MCF 10A (cell line): ENCODE measurements at regions of chr3 and their contacts with region 1.

Region 1: GRCh38 chr3:114383875-114384557 is 90.2 kb downstream of the TIGIT start:
- DNase-seq: peak; percentile 76
- H3K4me3 Mint-ChIP-seq: peak overlapping the region; percentile 53
- H3K27ac Mint-ChIP-seq: no peak overlapping the region
- H3K4me1 Mint-ChIP-seq: no peaks in the 10 kb centered on the region
- H3K27me3 Mint-ChIP-seq: no peaks in the 10 kb centered on the region
- CTCF ChIP-seq: peak; percentile 95

Region 2: GRCh38 chr3:114143817-114144216 is 240.2 kb before region 1 on chr3:
- CTCF ChIA-PET with region 1: no interaction called
- POLR2A ChIA-PET with region 1: no interaction called
- intact Hi-C with region 1: no loop called
- DNase-seq: no peak
- H3K4me3 Mint-ChIP-seq: no peak overlapping the region
- H3K27ac Mint-ChIP-seq: no peak overlapping the region
- H3K4me1 Mint-ChIP-seq: peaks cover 11% of the 10 kb centered on the region
- H3K27me3 Mint-ChIP-seq: no peaks in the 10 kb centered on the region
- CTCF ChIP-seq: no peak

Region 3: GRCh38 chr3:114400371-114400770 is 16.4 kb after region 1 on chr3:
- CTCF ChIA-PET with region 1: interaction called, 52 read pairs
- POLR2A ChIA-PET with region 1: interaction called, 4 read pairs
- intact Hi-C with region 1: no loop called
- DNase-seq: no peak
- H3K4me3 Mint-ChIP-seq: no peak overlapping the region
- H3K27ac Mint-ChIP-seq: no peak overlapping the region
- H3K4me1 Mint-ChIP-seq: peaks cover 5% of the 10 kb centered on the region
- H3K27me3 Mint-ChIP-seq: no peaks in the 10 kb centered on the region
- CTCF ChIP-seq: no peak

Region 4: GRCh38 chr3:114418724-114419543 is 34.9 kb after region 1 on chr3:
- CTCF ChIA-PET with region 1: interaction called, 65 read pairs
- POLR2A ChIA-PET with region 1: no interaction called
- intact Hi-C with region 1: loop called (anchors 1 kb)
- DNase-seq: peak; percentile 83
- H3K4me3 Mint-ChIP-seq: peak overlapping the region; percentile 50
- H3K27ac Mint-ChIP-seq: peak overlapping the region; percentile 19
- H3K4me1 Mint-ChIP-seq: peaks cover 10% of the 10 kb centered on the region
- H3K27me3 Mint-ChIP-seq: no peaks in the 10 kb centered on the region
- CTCF ChIP-seq: peak; percentile 75

Region 5: DNA sequence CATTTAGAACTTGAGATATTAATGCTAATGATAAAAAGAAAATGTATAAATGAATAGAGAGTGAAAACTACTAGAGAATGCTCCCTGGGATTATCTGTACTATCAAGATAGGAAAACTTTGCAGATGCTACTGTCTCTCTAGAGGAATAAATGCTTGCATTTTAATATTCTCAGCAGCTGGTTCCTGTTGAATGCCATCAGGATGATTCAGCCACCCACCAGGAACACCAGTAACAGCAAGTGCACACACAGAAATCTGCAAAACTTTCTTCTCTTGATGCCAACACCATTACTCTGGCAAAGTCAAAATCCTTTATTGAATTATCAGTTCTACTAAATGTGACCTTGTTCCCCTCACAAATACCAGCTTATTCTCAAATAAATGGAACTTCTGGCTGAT is 58.2 kb after region 1 on chr3:
- CTCF ChIA-PET with region 1: interaction called, 12 read pairs
- POLR2A ChIA-PET with region 1: no interaction called
- intact Hi-C with region 1: no loop called
- DNase-seq: peak; percentile 20
- H3K4me3 Mint-ChIP-seq: no peak overlapping the region
- H3K27ac Mint-ChIP-seq: no peak overlapping the region
- H3K4me1 Mint-ChIP-seq: peaks cover 25% of the 10 kb centered on the region
- H3K27me3 Mint-ChIP-seq: no peaks in the 10 kb centered on the region
- CTCF ChIP-seq: no peak

Region 6: GRCh38 chr3:114527036-114527644 is 143.1 kb after region 1 on chr3:
- CTCF ChIA-PET with region 1: interaction called, 4 read pairs
- POLR2A ChIA-PET with region 1: no interaction called
- intact Hi-C with region 1: loop called (anchors 10 kb)
- DNase-seq: peak; percentile 30
- H3K4me3 Mint-ChIP-seq: no peak overlapping the region
- H3K27ac Mint-ChIP-seq: no peak overlapping the region
- H3K4me1 Mint-ChIP-seq: no peaks in the 10 kb centered on the region
- H3K27me3 Mint-ChIP-seq: no peaks in the 10 kb centered on the region
- CTCF ChIP-seq: peak; percentile 41

Region 7: DNA sequence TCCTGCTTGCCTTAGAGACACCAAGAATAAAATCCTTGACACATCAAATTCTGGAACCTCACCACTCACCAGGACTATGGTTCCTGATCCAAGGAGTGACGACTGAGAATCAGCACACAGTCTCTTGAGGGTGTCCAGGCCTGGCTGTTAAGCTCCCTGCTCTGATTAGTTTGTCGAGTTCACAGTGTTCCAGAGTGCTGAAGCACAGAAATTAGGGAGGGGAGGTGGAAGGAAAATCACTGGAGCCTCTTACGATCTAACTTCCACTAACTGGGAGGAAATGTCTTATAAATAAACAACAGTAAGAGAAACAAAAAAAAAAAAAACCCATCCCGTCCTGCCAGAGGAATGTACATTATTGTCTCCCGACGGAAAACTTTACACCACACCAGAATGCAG is 240.0 kb after region 1 on chr3:
- CTCF ChIA-PET with region 1: no interaction called
- POLR2A ChIA-PET with region 1: no interaction called
- intact Hi-C with region 1: no loop called
- DNase-seq: peak; percentile 12
- H3K4me3 Mint-ChIP-seq: peak overlapping the region; percentile 48
- H3K27ac Mint-ChIP-seq: peak overlapping the region; percentile 82
- H3K4me1 Mint-ChIP-seq: peaks cover 20% of the 10 kb centered on the region
- H3K27me3 Mint-ChIP-seq: no peaks in the 10 kb centered on the region
- CTCF ChIP-seq: no peak

Region 8: DNA sequence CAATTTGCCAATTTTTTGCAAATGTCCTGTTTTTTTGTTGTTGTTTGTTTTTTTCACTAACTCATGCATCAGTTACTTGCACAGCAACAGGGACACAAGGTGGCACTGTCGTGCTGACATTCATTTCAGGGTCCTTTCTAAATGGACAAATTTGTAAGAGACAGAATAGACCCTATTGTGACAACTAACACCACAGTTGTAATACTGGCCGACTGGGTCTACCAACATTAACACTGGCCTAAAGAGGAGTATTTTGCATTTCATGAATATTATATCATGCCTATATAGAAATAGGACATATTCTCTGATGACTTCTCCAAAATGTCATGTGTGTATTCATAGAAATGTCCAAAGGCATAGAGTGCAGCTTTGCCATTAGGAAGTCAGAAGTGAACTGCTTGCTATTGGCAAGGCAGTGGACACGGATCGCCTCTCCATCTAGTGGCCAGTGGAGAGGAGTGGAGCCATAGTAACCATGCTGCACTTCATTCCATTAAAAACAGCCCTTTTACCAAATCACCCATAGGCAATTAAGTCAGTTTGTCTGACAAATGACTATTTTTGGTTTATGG is 708.3 kb after region 1 on chr3:
- CTCF ChIA-PET with region 1: interaction called, 15 read pairs
- POLR2A ChIA-PET with region 1: interaction called, 3 read pairs
- intact Hi-C with region 1: loop called (anchors 5 kb)
- DNase-seq: peak; percentile 50
- H3K4me3 Mint-ChIP-seq: no peak overlapping the region
- H3K27ac Mint-ChIP-seq: no peak overlapping the region
- H3K4me1 Mint-ChIP-seq: peaks cover 1% of the 10 kb centered on the region
- H3K27me3 Mint-ChIP-seq: no peaks in the 10 kb centered on the region
- CTCF ChIP-seq: peak; percentile 44